ENCODE measurements at regions of chr6 and their contacts with region 1.

Region 1: DNA sequence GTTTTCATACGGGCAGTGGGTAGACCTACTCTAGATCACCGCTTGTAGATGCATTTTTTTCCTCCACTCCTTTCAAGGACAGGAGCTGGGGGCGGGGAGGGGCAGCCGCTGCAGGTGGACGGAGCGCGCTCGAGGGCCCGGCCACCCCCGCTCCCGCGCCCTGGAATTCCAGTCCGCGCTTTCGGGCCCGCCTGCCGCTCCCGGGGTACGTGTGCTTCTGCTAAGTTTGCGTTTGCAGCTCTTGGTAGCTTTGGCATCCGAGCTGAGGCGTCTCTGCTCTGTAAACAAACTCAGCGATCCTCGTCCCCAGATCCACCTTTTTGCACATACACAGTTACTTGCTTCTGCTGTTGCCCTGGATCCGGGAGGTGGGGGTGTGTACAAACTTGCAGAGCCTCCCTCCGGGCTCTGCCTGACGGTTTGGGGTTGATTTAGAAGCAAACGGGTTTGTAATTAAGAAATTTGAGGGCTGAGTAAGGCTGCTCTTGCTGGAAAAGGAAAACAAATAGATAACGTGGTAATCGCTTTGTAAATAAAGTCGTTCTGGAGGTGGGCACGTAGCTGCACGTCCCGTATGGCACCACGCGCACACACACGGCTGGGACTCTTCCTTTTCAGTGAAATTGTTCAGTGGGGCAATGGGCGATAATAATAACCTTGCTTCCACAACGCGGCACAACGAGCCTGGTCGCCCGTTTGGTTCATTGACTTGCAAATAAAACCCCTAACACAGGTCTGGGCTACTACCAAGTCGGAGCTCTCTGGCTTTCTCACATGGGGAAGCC is 976 bp upstream of the CITED2 start:
- DNase-seq: peak; percentile 87
- ATAC-seq: peak; percentile 58
- H3K4me3 Mint-ChIP-seq: peak overlapping the region; percentile 86
- H3K27ac Mint-ChIP-seq: peak overlapping the region; percentile 98
- H3K4me1 Mint-ChIP-seq: peaks cover 34% of the 10 kb centered on the region
- H3K27me3 Mint-ChIP-seq: no peaks in the 10 kb centered on the region
- CTCF ChIP-seq: no peak

Region 2: GRCh38 chr6:139134817-139135581 is 240.4 kb before region 1 on chr6 and contains the start of gene HECA:
- CTCF ChIA-PET with region 1: interaction called, 3 read pairs
- POLR2A ChIA-PET with region 1: interaction called, 10 read pairs
- intact Hi-C with region 1: no loop called
- DNase-seq: peak; percentile 99
- ATAC-seq: peak; percentile 77
- H3K4me3 Mint-ChIP-seq: peak within 1 kb of the TSS; percentile 92
- H3K27ac Mint-ChIP-seq: peak within 1 kb of the TSS; percentile 92
- H3K4me1 Mint-ChIP-seq: peaks cover 59% of the 10 kb centered on the region
- H3K27me3 Mint-ChIP-seq: no peaks in the 10 kb centered on the region
- CTCF ChIP-seq: no peak
- total RNA-seq, gene HECA: 45.4 to 47.1 TPM

Region 3: DNA sequence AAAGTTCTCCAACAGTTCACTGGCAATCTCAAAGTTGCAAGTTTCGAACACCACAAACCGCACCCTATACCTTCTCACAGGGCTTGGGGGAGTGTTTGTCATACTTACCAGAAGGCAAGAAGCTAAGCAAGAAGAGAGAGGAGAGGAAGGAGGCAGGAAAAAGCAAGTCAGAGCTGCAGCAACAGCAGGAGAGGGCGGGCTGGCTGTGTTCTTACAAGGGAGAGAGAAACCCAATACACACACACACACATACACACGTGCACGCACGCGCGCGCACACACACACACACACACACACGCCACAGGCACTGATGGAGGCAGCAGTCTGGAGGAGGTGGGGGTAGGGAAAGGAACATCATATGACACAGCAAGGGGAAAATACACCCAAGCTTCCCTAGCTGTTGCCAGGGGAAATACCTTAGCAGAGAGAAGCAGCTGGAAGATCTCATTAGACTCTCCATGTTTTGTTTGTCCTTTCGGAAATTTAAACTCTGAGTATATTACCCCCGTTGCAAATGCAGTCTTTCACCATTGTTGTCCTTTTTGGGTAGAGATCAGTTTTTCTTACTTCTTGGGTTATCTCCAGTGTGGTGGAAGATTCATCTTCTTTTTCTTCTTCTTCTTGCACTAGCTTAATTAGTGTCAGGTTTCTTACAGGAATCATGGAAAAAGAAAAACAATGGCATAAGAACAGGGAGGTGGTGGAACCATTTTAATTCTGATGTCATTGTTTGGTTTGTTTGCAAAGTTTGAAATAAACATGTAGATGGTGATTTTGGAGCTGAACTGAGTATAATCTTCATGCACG is 83.4 kb before region 1 on chr6 and contains the start of gene TXLNB:
- CTCF ChIA-PET with region 1: interaction called, 14 read pairs
- POLR2A ChIA-PET with region 1: interaction called, 11 read pairs
- intact Hi-C with region 1: no loop called
- DNase-seq: peak; percentile 92
- ATAC-seq: peak; percentile 92
- H3K4me3 Mint-ChIP-seq: peak within 1 kb of the TSS; percentile 76
- H3K27ac Mint-ChIP-seq: peak within 1 kb of the TSS; percentile 96
- H3K4me1 Mint-ChIP-seq: peaks cover 55% of the 10 kb centered on the region
- H3K27me3 Mint-ChIP-seq: no peaks in the 10 kb centered on the region
- CTCF ChIP-seq: no peak
- total RNA-seq, gene TXLNB: 0.11 to 0.22 TPM

Region 4: DNA sequence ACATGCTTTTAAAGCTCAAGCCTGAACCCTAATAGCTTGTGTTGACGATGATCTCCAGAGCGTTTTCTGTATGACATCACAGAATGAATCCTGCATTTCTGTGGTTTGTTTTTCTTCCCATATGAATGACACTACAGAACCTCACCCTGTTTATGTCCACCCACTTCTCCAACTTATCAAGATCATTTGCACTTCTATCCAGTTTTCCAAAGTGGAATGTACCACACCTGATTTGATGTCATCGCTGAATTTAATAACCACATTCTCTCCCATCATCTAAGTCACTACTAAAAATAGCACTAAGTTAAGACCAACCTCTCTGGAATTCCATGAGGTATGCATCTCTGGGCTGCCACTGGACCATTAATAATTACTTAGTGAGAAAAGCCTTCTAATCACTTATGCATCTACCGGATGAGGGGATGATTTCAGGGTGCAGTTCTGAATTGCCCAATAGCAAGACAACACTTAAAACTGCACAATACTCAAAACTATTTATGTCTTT is 32.3 kb after region 1 on chr6:
- CTCF ChIA-PET with region 1: no interaction called
- POLR2A ChIA-PET with region 1: no interaction called
- intact Hi-C with region 1: no loop called
- DNase-seq: no peak
- ATAC-seq: no peak
- H3K4me3 Mint-ChIP-seq: no peak overlapping the region
- H3K27ac Mint-ChIP-seq: no peak overlapping the region
- H3K4me1 Mint-ChIP-seq: no peaks in the 10 kb centered on the region
- H3K27me3 Mint-ChIP-seq: peaks cover 3% of the 10 kb centered on the region
- CTCF ChIP-seq: no peak

Region 5: GRCh38 chr6:139448051-139448649 is 72.7 kb after region 1 on chr6:
- CTCF ChIA-PET with region 1: no interaction called
- POLR2A ChIA-PET with region 1: no interaction called
- intact Hi-C with region 1: no loop called
- DNase-seq: no peak
- ATAC-seq: no peak
- H3K4me3 Mint-ChIP-seq: no peak overlapping the region
- H3K27ac Mint-ChIP-seq: no peak overlapping the region
- H3K4me1 Mint-ChIP-seq: no peaks in the 10 kb centered on the region
- H3K27me3 Mint-ChIP-seq: no peaks in the 10 kb centered on the region
- CTCF ChIP-seq: no peak

Region 6: GRCh38 chr6:139519571-139520031 is 144.2 kb after region 1 on chr6:
- CTCF ChIA-PET with region 1: no interaction called
- POLR2A ChIA-PET with region 1: interaction called, 3 read pairs
- intact Hi-C with region 1: loop called (anchors 10 kb)
- DNase-seq: no peak
- ATAC-seq: no peak
- H3K4me3 Mint-ChIP-seq: no peak overlapping the region
- H3K27ac Mint-ChIP-seq: no peak overlapping the region
- H3K4me1 Mint-ChIP-seq: peaks cover 7% of the 10 kb centered on the region
- H3K27me3 Mint-ChIP-seq: peaks cover 5% of the 10 kb centered on the region
- CTCF ChIP-seq: no peak

Region 7: DNA sequence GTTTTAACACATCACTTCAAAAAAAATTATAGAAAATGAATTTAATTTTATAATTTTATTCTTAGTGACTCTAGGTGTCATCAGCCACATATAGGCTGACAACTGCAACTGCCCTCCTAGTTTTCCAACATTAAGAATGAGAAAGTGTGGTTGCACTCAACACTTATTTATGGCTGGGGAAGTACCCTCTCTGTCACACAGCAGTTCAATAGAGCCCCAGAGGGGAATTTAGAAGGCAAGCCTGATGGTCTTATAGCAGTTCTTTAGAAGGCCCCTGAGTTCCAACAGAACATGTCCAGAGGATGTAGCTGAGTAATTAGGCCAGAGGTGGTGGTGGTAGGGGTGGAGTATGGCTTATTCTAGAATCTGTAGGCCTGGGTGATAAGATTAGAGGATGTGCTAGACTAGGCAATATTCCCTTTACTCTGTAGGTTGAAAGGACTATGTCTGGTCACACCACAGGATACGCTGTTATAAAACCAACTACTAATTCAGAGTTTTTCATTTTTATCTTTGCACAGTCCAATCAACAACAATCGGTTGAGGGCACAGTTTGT is 225.6 kb after region 1 on chr6:
- CTCF ChIA-PET with region 1: interaction called, 4 read pairs
- POLR2A ChIA-PET with region 1: no interaction called
- intact Hi-C with region 1: loop called (anchors 10 kb)
- DNase-seq: peak; percentile 30
- ATAC-seq: peak; percentile 96
- H3K4me3 Mint-ChIP-seq: no peak overlapping the region
- H3K27ac Mint-ChIP-seq: peak overlapping the region; percentile 72
- H3K4me1 Mint-ChIP-seq: peaks cover 11% of the 10 kb centered on the region
- H3K27me3 Mint-ChIP-seq: peaks cover 3% of the 10 kb centered on the region
- CTCF ChIP-seq: no peak

Region 8: GRCh38 chr6:140153703-140154102 is 778.3 kb after region 1 on chr6:
- CTCF ChIA-PET with region 1: no interaction called
- POLR2A ChIA-PET with region 1: no interaction called
- intact Hi-C with region 1: no loop called
- DNase-seq: no peak
- ATAC-seq: no peak
- H3K4me3 Mint-ChIP-seq: no peak overlapping the region
- H3K27ac Mint-ChIP-seq: no peak overlapping the region
- H3K4me1 Mint-ChIP-seq: no peaks in the 10 kb centered on the region
- H3K27me3 Mint-ChIP-seq: no peaks in the 10 kb centered on the region
- CTCF ChIP-seq: no peak